Activated T-helper 1 cell treated with anti-CD3 and anti-CD28 coated beads, Interleukin-12 subunit alpha, Interleukin-12 subunit beta, Interleukin-2, Interleukin-4 antibody, amounts not matched to agents 30 ng/mL and 10 ng/mL and 1 ng/mL, durations not matched to agents 14 hours and 24 hours and 36 hours (primary cell): ENCODE measurements at regions of chr9 and their contacts with region 1.

Region 1: DNA sequence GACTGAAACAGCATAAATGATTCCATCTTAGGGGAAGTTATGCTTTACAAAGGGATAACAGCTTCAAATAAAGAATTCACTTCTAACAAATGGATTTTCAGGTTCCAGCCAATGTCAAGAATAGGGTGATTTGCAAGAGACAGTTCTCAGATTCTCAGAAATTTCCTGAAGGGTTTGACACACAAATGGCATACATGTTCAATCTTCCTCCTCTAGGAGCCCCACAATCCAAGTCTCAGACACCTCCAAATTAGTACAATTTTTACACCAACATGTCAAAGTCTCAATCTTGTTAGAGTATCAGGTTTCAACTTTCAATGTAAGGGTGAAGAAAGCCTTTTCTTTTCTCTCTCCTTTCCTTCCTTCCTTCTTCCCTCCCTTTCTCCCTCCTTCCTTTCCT is 996.6 kb downstream of the TLE1 start:
- DNase-seq: no peak
- H3K4me3 Mint-ChIP-seq: no peak overlapping the region
- H3K27ac Mint-ChIP-seq: no peak overlapping the region
- H3K4me1 Mint-ChIP-seq: no peaks in the 10 kb centered on the region
- H3K27me3 Mint-ChIP-seq: no peaks in the 10 kb centered on the region

Region 2: GRCh38 chr9:80679916-80680315 is 12.8 kb before region 1 on chr9:
- intact Hi-C with region 1: loop called (anchors 1 kb)
- DNase-seq: no peak
- H3K4me3 Mint-ChIP-seq: no peak overlapping the region
- H3K27ac Mint-ChIP-seq: no peak overlapping the region
- H3K4me1 Mint-ChIP-seq: no peaks in the 10 kb centered on the region
- H3K27me3 Mint-ChIP-seq: no peaks in the 10 kb centered on the region

Region 3: DNA sequence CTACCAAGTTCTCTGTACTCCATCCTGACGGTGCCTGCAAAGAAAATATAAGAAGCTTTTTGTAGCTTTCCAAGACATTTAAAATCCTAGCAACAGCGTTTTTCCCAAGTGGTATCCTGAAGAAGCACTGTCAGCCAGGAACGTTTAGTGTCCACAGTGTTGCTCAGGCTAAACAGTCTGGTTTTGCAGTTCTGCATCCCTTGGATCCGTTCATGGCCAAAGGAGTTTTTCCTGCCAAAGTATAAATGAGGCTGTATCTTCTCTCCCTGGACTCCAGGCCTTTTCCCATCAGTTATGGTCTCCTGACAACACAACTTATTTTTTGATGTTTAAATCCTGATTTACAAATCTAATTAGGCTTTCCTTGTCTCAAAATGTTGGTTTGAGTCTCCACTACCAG is 70.8 kb after region 1 on chr9:
- intact Hi-C with region 1: no loop called
- DNase-seq: no peak
- H3K4me3 Mint-ChIP-seq: no peak overlapping the region
- H3K27ac Mint-ChIP-seq: no peak overlapping the region
- H3K4me1 Mint-ChIP-seq: no peaks in the 10 kb centered on the region
- H3K27me3 Mint-ChIP-seq: no peaks in the 10 kb centered on the region